ENCODE measurements at regions of chr15 and their contacts with region 1.

Region 1: GRCh38 chr15:50003786-50004334 is 115.2 kb downstream of the ATP8B4 start:
- DNase-seq: peak; percentile 83 to 92 (median 86)
- ATAC-seq: peak; percentile 97 to 100 (median 100)
- H3K4me3 ChIP-seq: no peak overlapping the region
- H3K27ac ChIP-seq: peak overlapping the region in 6 of 12 donors; percentile 11 to 44 (median 21)
- H3K4me1 ChIP-seq: peaks cover 0 to 10% (median 4%) of the 10 kb centered on the region in 12 donors
- H3K27me3 ChIP-seq: no peaks in the 10 kb centered on the region
- CTCF ChIP-seq: peak; percentile 65 to 87 (median 78)
- POLR2A ChIP-seq: no peak

Region 2: GRCh38 chr15:48877630-48878595 is 1125.9 kb before region 1 on chr15 and contains the start of gene EID1:
- intact Hi-C with region 1: loop called in 1 of 10 experiments (anchors 5 kb)
- DNase-seq: peak; percentile 91 to 96 (median 93)
- ATAC-seq: peak; percentile 99 to 100 (median 100)
- H3K4me3 ChIP-seq: peak within 1 kb of the TSS; percentile 56 to 94 (median 74)
- H3K27ac ChIP-seq: peak within 1 kb of the TSS; percentile 51 to 96 (median 90)
- H3K4me1 ChIP-seq: peaks cover 0 to 25% (median 16%) of the 10 kb centered on the region in 12 donors
- H3K27me3 ChIP-seq: no peaks in the 10 kb centered on the region
- CTCF ChIP-seq: peak in 2 of 12 donors; percentile 8 to 29
- POLR2A ChIP-seq: peak in 1 of 2 donors; percentile 77
- total RNA-seq, gene EID1: 169 to 393 (median 224) TPM

Region 3: GRCh38 chr15:49235446-49236124 is 768.3 kb before region 1 on chr15:
- intact Hi-C with region 1: loop called in 7 of 10 experiments (anchors 5 to 10 kb)
- DNase-seq: peak in 4 of 5 donors; percentile 32 to 40 (median 36)
- ATAC-seq: peak in 3 of 4 donors; percentile 81 to 85 (median 82)
- H3K4me3 ChIP-seq: no peak overlapping the region
- H3K27ac ChIP-seq: peak overlapping the region in 4 of 12 donors; percentile 4 to 29 (median 18)
- H3K4me1 ChIP-seq: peaks cover 0 to 33% (median 11%) of the 10 kb centered on the region in 12 donors
- H3K27me3 ChIP-seq: no peaks in the 10 kb centered on the region
- CTCF ChIP-seq: peak; percentile 56 to 84 (median 76)
- POLR2A ChIP-seq: no peak

Region 4: GRCh38 chr15:49620658-49621368 is 383.0 kb before region 1 on chr15 and contains the starts of genes DTWD1 and FAM227B:
- intact Hi-C with region 1: loop called in 2 of 10 experiments (anchors 2 to 10 kb)
- DNase-seq: peak; percentile 97 to 99 (median 98)
- ATAC-seq: peak; percentile 99 to 100 (median 100)
- H3K4me3 ChIP-seq: peak within 1 kb of the TSS; percentile 59 to 87 (median 74)
- H3K27ac ChIP-seq: peak within 1 kb of the TSS; percentile 78 to 97 (median 93)
- H3K4me1 ChIP-seq: peaks cover 0 to 40% (median 19%) of the 10 kb centered on the region in 12 donors
- H3K27me3 ChIP-seq: no peaks in the 10 kb centered on the region
- CTCF ChIP-seq: peak in 4 of 12 donors; percentile 14 to 25 (median 14)
- POLR2A ChIP-seq: peak in 1 of 2 donors; percentile 84
- total RNA-seq, gene DTWD1: 6.3 to 28.0 (median 18.4) TPM
- total RNA-seq, gene FAM227B: 6.1 to 18.8 (median 14.4) TPM

Region 5: DNA sequence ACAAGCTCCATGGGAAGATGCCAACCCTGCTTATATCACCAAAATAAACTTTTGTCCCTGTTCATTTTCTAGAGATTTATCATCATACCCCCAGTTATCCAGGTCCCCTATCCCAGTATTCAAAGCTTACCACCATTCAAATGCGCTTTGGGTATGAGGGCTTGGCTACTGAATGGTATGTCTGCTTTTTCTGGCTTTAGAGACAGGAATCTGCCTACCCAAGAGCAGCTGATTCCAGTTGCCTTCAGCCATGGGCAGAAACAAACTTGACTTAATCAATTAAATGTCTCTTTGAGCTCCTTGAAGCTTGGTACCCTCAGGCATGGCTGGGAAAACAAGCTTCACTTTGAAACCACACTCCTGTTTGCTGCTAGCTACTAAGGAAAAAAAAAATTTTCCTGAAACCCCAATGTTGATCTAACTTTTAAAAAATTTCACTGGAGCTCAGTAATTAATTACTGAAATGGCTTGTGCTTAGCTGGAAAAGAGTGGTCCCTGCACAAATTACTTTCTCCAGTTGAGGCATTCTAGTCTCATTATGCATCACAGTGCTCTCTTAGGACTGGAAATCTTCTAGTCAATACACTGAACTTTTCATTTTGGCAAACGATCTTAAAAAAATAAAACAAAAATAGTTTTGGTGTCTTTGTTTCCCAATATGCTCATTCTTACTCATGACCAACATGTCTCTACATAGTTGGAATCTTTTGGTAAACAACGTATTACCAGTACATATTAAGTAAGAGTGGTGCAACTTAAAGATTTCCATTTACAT is 140.2 kb before region 1 on chr15:
- intact Hi-C with region 1: no loop called
- DNase-seq: no peak
- ATAC-seq: no peak
- H3K4me3 ChIP-seq: no peak overlapping the region
- H3K27ac ChIP-seq: peak overlapping the region in 5 of 12 donors; percentile 35 to 70 (median 57)
- H3K4me1 ChIP-seq: peaks cover 0 to 23% (median 0%) of the 10 kb centered on the region in 12 donors
- H3K27me3 ChIP-seq: no peaks in the 10 kb centered on the region
- CTCF ChIP-seq: no peak
- POLR2A ChIP-seq: no peak

Region 6: DNA sequence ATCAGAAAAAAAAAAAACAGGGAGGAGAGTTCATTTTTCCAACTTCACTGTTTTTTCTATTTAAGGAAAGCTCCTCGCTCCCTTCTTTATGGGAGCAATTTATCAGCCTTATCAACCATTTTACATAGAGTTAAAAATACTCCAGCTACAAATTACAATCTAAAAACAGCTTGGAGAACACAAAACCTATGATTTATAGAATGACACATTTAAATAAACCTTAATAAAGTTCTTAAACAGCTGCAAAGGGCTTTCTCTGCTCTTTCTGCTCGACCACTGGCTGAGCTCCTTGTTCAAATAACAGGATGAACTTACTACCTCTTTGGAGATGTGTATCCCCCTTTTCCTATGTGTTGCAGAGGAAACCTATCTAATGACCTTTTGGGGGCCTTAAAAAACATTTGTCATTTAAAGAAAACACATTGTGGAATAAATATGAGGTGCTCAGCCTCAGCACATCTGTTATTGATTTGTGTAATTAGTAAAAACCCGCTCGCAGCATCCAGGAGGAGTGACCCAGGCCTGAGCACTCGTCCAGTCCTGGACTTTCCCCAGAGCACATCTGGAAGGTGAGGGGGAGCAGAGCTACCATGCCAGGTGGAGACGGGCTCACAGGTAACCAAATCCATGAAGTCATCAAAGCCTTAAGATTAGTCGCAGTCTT is 116.1 kb before region 1 on chr15:
- intact Hi-C with region 1: loop called in 1 of 10 experiments (anchors 10 kb)
- DNase-seq: no peak
- ATAC-seq: no peak
- H3K4me3 ChIP-seq: no peak overlapping the region
- H3K27ac ChIP-seq: peak overlapping the region in 1 of 12 donors; percentile 70
- H3K4me1 ChIP-seq: no peaks in the 10 kb centered on the region
- H3K27me3 ChIP-seq: no peaks in the 10 kb centered on the region
- CTCF ChIP-seq: no peak
- POLR2A ChIP-seq: no peak

Region 7: GRCh38 chr15:50024281-50024680 is 20.4 kb after region 1 on chr15:
- intact Hi-C with region 1: no loop called
- DNase-seq: no peak
- ATAC-seq: no peak
- H3K4me3 ChIP-seq: peak overlapping the region in 3 of 12 donors; percentile 15 to 22 (median 19)
- H3K27ac ChIP-seq: no peak overlapping the region
- H3K4me1 ChIP-seq: peaks cover 0 to 13% (median 1%) of the 10 kb centered on the region in 12 donors
- H3K27me3 ChIP-seq: no peaks in the 10 kb centered on the region
- CTCF ChIP-seq: no peak
- POLR2A ChIP-seq: no peak

Measured in heart left ventricle (tissue), 16 donors.